AG04450 (cell line): ENCODE measurements at regions of chr14 and their contacts with region 1.

Region 1: GRCh38 chr14:103920981-103921854 is 7.0 kb upstream of the TDRD9 start:
- DNase-seq: peak; percentile 68
- H3K4me3 ChIP-seq: peak overlapping the region; percentile 100
- H3K27ac ChIP-seq: peak overlapping the region; percentile 11
- H3K27me3 ChIP-seq: peaks cover 7% of the 10 kb centered on the region
- CTCF ChIP-seq: peak; percentile 96

Region 2: GRCh38 chr14:103775506-103775905 is 145.7 kb before region 1 on chr14:
- CTCF ChIA-PET with region 1: interaction called, 17 read pairs
- POLR2A ChIA-PET with region 1: no interaction called
- DNase-seq: no peak
- H3K4me3 ChIP-seq: no peak overlapping the region
- H3K27ac ChIP-seq: no peak overlapping the region
- H3K27me3 ChIP-seq: no peaks in the 10 kb centered on the region
- CTCF ChIP-seq: no peak

Region 3: GRCh38 chr14:103899316-103899715 is 21.9 kb before region 1 on chr14:
- CTCF ChIA-PET with region 1: interaction called, 25 read pairs
- POLR2A ChIA-PET with region 1: no interaction called
- DNase-seq: no peak
- H3K4me3 ChIP-seq: no peak overlapping the region
- H3K27ac ChIP-seq: no peak overlapping the region
- H3K27me3 ChIP-seq: peaks cover 4% of the 10 kb centered on the region
- CTCF ChIP-seq: no peak

Region 4: DNA sequence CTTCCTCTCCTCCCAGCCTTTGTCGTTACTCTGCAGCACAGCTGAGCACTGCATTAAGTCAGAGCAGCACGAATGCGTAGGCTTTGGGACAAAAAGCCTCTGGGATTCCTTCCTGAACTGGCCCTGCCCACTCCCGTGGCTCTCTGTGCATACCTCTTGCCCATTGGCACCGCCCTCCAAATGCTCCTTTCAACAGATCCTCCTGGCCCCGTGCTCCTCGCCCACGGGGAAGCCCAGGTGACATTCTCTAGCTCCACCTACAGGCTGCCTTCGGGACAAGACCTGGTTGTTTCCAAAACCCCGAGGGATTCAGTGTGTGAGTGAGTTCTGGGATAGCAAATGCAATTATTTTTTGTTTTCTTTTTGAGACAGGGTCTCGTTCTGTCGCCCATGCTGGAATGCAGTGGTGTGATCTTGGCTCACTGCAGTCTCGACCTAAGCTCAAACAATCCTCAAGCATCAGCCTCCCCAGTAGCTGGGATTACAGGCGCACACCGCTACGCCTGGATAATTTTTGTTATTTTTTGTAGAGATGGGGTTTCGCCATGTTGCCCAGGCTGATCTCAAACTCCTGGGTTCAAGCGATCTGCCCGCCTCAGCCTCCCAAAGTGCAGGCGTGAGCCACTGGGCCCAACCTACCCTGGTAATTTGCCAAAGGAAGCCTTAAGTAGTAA is 10.8 kb before region 1 on chr14:
- CTCF ChIA-PET with region 1: interaction called, 17 read pairs
- POLR2A ChIA-PET with region 1: no interaction called
- DNase-seq: peak; percentile 7
- H3K4me3 ChIP-seq: no peak overlapping the region
- H3K27ac ChIP-seq: no peak overlapping the region
- H3K27me3 ChIP-seq: no peaks in the 10 kb centered on the region
- CTCF ChIP-seq: peak; percentile 79

Region 5: GRCh38 chr14:104049576-104050241 is 128.5 kb after region 1 on chr14:
- CTCF ChIA-PET with region 1: no interaction called
- POLR2A ChIA-PET with region 1: no interaction called
- DNase-seq: no peak
- H3K4me3 ChIP-seq: no peak overlapping the region
- H3K27ac ChIP-seq: no peak overlapping the region
- H3K27me3 ChIP-seq: no peaks in the 10 kb centered on the region
- CTCF ChIP-seq: no peak